G401 (cell line): ENCODE measurements at regions of chr3 and their contacts with region 1.

Region 1: GRCh38 chr3:22122567-22122966 is 371.6 kb upstream of the ZNF385D start:
- DNase-seq: no peak

Region 2: DNA sequence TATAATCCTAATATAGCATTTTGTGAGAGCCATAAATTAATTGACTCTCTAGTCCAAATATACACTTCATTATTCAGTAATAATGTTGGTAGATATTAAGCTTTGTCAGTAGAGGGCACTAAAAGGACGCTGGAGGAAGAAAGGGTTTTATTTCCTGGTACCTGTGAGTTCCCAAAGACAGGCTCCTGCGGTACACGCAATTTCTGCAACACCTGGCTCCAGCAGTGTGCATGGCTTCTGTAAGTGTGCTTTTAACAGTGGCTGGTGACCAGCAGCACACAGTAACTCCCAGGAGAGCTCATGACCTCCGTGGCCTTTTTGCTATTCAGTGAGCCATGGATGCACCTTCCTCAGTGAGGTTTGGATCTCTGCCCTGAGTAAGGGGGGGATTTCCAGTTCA is 33.3 kb before region 1 on chr3:
- in situ Hi-C with region 1: loop called (anchors 5 kb)
- DNase-seq: peak; percentile 59